Heart right ventricle (tissue), 16 donors: ENCODE measurements at regions of chr10 and their contacts with region 1.

Region 1: DNA sequence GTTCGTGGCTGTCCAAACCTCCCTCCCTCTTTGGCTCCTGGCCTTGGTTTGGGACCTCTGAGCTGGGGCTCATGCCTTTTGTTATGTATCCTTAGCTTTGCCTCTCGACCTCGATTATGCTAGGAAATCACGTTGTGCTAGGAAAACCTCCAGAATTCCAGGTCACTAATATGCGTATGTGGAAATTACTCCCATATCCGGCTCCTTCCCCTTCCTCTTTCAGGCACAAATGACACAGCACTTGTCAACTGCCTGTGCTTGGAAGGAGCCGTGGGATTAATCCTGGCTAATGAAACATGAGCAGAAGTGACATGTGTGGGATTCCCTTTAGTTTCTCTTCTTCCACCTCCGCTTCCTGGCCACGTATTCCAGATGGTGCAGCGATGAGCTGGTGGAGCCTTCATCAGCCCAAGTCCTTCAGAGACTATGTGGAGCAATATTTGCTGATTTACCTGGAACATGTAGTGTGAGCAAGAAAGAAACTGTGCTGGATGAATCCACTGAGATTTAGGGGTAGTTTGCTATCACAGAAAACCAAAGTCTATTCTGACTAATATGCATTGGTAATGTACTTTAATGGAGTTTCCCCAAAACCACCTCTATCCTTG is 149.2 kb downstream of the REEP3 start:
- DNase-seq: peak in 1 of 2 donors; percentile 80
- ATAC-seq: peak; percentile 74 to 92 (median 88)
- H3K4me3 ChIP-seq: peak overlapping the region in 2 of 10 donors; percentile 3 to 18
- H3K27ac ChIP-seq: peak overlapping the region; percentile 69 to 89 (median 77)
- H3K4me1 ChIP-seq: peaks cover 3 to 62% (median 53%) of the 10 kb centered on the region in 9 donors
- H3K27me3 ChIP-seq: no peaks in the 10 kb centered on the region
- CTCF ChIP-seq: no peak

Region 2: GRCh38 chr10:63644418-63645142 is 25.8 kb before region 1 on chr10:
- intact Hi-C with region 1: loop called in 1 of 10 experiments (anchors 1 kb)
- DNase-seq: no peak
- ATAC-seq: peak in 7 of 8 donors; percentile 53 to 88 (median 84)
- H3K4me3 ChIP-seq: no peak overlapping the region
- H3K27ac ChIP-seq: peak overlapping the region; percentile 69 to 94 (median 82)
- H3K4me1 ChIP-seq: peaks cover 0 to 44% (median 19%) of the 10 kb centered on the region in 9 donors
- H3K27me3 ChIP-seq: no peaks in the 10 kb centered on the region
- CTCF ChIP-seq: no peak